Head of caudate nucleus (tissue), 42 donors: ENCODE measurements at regions of chr12 and their contacts with region 1.

Region 1: DNA sequence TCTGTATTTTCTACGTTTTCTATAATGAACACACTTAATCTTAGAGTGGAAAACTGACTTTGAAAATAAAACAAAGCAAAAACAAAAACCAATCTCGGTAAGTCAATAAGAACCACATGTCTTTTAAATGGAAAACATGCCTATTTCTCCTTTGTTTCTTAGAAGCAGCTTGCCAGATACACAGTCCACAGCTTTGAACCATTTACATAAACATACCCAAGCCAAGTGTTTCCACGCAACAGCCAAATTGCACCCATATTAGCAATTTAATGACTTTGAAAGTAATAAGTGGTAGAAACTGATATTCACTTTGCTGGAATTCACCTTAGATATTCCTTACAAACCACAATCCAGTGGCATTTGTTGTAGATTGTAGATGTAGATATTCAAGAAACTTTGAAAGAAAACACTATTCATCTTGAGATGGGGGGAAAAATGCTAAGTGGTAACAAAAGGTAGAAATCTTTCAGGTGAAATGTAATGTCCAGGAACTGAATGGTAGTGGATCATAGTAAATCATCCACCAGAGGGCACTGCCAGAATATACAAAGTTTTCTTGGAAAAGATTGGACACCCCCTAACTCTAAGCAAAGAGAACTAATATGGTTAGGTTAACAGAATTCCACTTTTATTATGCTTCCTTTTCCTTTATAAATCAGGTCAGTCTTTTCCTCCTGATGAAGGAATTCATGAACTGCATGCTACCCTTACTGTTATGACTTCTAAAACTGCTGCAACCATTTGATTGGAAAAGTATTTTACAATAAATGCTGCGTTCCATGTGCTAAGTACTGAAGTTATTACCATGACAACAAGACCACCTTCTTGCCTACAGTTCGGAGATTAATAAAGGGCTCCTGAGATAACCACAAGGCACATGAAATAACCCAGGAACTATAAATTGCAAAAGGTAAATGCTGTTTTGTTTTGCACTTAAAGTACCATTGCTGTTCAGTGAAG is 69.8 kb downstream of the RERG start:
- DNase-seq: peak in 7 of 42 donors; percentile 17 to 63 (median 42)

Region 2: DNA sequence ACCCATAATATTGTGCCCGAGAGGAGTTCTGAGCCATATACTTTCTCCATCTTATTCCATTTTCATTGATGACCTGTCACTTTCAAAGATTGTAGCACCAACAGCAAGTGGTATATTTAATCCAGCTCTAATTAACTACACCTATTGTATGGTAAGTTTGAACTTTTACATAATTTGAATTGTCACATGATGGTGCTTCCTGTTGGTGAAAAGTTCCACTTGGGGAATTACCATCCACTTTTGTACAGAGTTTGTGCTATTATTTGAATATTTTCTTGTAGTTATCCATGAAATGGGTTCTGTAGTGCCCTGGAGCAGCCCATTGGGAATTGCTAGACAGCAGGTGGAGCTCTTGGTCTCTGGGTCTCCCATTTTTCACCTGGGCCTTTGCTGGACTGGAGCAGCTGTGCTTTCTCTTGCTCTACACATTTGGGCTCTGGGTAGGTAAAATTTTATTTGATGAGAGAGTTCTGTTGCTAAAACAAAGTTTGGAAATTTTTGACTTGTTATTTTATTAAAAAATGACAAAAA is 340.4 kb before region 1 on chr12:
- intact Hi-C with region 1: no loop called
- DNase-seq: no peak

Region 3: DNA sequence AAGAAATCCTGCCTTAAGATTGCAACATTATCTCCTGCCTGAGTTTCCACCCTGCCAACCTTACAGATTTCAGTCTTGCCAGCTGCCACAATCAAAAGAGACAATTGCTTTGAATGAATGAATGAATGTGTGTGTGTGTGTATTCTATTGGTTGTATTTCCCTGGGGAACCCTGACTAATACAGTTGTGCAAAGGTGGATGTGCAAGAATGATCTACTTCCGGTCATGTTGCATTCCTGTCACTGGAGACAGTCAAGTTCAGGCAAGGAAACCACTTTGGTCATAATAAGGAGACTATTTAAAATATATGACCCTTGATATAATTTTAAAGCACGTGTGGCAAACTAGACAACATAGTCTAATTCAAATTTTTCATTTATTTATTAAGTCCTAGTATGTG is 56.7 kb after region 1 on chr12:
- intact Hi-C with region 1: no loop called
- DNase-seq: no peak

Region 4: GRCh38 chr12:15220994-15221885 is 69.8 kb after region 1 on chr12 and contains the start of gene RERG:
- intact Hi-C with region 1: loop called (anchors 5 kb)
- DNase-seq: peak; percentile 60 to 93 (median 86)